WTC11 (cell line): ENCODE measurements at regions of chr10 and their contacts with region 1.

Region 1: DNA sequence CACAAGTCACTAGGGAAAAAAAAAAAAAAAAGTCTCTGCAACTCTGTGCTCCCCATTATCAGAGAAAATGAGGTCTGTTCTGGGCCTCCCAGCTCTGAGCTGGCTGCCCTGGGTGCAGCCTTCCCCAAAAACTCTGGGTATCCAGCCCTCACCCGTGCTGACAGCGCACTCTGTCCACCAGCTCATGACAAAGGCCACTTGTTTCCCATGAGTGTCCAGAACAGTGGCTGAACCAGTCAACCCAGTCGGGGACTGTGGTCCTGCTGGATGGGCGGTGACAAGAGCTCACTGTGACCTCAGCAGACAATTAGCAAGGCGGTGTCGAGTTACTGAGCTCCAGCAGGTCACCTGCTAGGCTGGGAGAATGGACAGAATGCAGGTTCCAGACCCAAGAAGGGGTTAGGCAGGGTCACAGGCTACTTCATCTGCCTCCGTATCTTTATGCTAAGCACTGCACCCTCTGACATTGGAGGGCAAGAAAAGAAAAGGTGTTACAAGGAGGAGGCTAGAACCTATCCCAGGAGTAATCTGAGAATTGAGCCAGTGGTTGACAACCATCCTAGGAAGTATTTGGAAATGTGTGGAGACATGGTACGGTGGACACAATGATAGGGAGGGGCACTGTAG is 37.2 kb downstream of the DLG5 start:
- DNase-seq: peak; percentile 69
- ATAC-seq: peak; percentile 73
- H3K4me3 Mint-ChIP-seq: peak overlapping the region; percentile 46
- H3K27ac Mint-ChIP-seq: peak overlapping the region; percentile 97
- H3K4me1 Mint-ChIP-seq: peaks cover 93% of the 10 kb centered on the region
- H3K27me3 Mint-ChIP-seq: no peaks in the 10 kb centered on the region
- CTCF ChIP-seq: no peak

Region 2: DNA sequence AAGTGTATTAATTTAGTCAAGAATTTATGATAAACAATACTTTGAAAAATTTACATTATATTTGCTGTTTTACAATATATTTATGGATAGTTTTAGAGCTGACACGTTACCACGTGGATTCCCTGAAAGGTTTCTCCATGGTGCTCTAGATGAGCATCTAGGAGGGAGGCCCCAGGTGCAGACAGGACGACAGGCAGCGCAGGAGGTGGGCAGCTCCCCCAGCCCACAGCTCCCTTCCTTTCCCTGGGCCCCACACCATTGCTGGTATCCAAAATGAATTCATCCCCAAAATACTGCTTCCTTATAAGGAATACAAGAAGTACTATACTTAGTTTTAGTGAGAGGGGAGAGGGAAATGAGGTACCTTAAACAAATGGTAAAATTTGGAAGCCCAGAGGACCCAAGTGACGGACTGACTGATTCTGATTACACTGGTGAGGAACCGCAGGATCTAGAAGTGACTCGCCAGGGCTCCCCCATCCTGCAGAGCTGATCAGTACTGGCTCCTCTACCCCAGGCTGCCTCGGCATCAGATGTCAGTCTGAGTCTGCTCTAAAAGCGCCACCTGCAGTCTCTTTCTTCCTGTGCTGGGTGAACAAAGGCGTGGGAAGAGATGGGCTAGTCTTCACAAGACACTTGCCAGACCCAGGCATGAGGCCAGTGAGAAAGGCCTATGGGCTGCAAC is 52.0 kb before region 1 on chr10:
- CTCF ChIA-PET with region 1: interaction called, 41 read pairs
- POLR2A ChIA-PET with region 1: no interaction called
- DNase-seq: peak; percentile 82
- ATAC-seq: peak; percentile 96
- H3K4me3 Mint-ChIP-seq: no peak overlapping the region
- H3K27ac Mint-ChIP-seq: peak overlapping the region; percentile 95; the same call in 1 of the 2 replicates
- H3K4me1 Mint-ChIP-seq: peaks cover 26% of the 10 kb centered on the region
- H3K27me3 Mint-ChIP-seq: no peaks in the 10 kb centered on the region
- CTCF ChIP-seq: no peak

Region 3: GRCh38 chr10:77865629-77866360 is 23.6 kb before region 1 on chr10:
- CTCF ChIA-PET with region 1: interaction called, 24 read pairs
- POLR2A ChIA-PET with region 1: no interaction called
- DNase-seq: peak; percentile 44
- ATAC-seq: peak; percentile 77
- H3K4me3 Mint-ChIP-seq: 0 out of 2 replicates have a peak overlapping the region, but pooled peaks have one; percentile 19
- H3K27ac Mint-ChIP-seq: peak overlapping the region; percentile 59
- H3K4me1 Mint-ChIP-seq: peaks cover 66% of the 10 kb centered on the region
- H3K27me3 Mint-ChIP-seq: no peaks in the 10 kb centered on the region
- CTCF ChIP-seq: no peak

Region 4: DNA sequence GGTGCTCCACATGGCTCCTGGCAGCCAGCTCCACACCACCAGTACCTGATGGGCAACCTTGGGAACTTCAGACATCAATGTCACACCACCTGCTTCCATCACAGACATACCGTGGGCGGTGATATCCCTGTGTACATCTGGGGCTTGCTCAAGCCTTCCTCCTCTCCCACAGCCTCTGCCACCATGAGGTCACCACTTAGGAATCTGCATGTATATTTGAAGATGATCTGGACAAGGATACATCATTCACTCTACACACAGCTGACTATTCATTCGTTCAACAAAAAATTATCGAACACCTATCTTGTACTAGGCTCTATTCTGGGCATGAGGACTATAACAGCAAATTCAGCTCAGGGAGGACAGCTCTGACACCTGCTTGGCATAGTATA is 30.3 kb after region 1 on chr10:
- CTCF ChIA-PET with region 1: interaction called, 48 read pairs
- POLR2A ChIA-PET with region 1: interaction called, 3 read pairs
- DNase-seq: no peak
- ATAC-seq: no peak
- H3K4me3 Mint-ChIP-seq: no peak overlapping the region
- H3K27ac Mint-ChIP-seq: no peak overlapping the region; the same call in 1 of the 2 replicates
- H3K4me1 Mint-ChIP-seq: peaks cover 46% of the 10 kb centered on the region
- H3K27me3 Mint-ChIP-seq: no peaks in the 10 kb centered on the region
- CTCF ChIP-seq: no peak

Region 5: GRCh38 chr10:77939561-77940001 is 50.2 kb after region 1 on chr10:
- CTCF ChIA-PET with region 1: interaction called, 27 read pairs
- POLR2A ChIA-PET with region 1: interaction called, 3 read pairs
- DNase-seq: no peak
- ATAC-seq: peak; percentile 24
- H3K4me3 Mint-ChIP-seq: no peak overlapping the region
- H3K27ac Mint-ChIP-seq: no peak overlapping the region
- H3K4me1 Mint-ChIP-seq: peaks cover 40% of the 10 kb centered on the region
- H3K27me3 Mint-ChIP-seq: peaks cover 3% of the 10 kb centered on the region
- CTCF ChIP-seq: no peak

Region 6: DNA sequence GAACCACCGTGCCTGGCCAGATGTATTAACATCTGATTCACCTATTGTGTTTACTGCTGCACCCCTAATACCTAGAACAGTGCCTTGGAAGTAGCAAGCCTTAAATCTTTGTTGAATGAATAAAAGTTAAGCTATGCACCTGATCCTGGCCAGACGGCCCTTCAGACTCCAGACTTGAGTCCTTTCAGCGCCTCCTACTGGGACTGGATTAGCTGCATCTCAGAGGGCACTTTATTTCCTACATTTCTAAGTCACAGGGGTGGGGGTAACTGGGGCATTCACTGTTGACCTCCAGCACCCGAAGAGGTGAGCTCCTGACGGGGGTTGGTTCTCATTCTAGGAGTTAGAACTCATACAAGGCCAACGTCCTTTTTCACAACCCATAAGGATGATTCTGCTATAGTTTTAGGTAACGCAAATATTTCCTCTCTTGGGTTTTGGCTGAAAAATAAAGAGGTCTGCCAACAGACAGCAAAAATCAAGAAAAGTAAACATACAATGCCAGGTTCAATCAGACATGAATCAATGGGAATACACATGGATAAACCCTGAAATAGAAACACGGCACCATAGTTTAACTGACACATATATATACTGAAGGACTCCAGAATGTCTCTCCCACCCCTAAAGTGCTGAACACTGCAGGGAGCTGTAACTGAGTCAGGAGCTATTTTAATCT is 85.1 kb after region 1 on chr10:
- CTCF ChIA-PET with region 1: interaction called, 129 read pairs
- POLR2A ChIA-PET with region 1: interaction called, 3 read pairs
- DNase-seq: peak; percentile 66
- ATAC-seq: peak; percentile 85
- H3K4me3 Mint-ChIP-seq: no peak overlapping the region
- H3K27ac Mint-ChIP-seq: peak overlapping the region; percentile 43; the same call in 1 of the 2 replicates
- H3K4me1 Mint-ChIP-seq: peaks cover 20% of the 10 kb centered on the region
- H3K27me3 Mint-ChIP-seq: no peaks in the 10 kb centered on the region
- CTCF ChIP-seq: peak; percentile 52